ENCODE measurements at regions of chr11 and their contacts with region 1.

Region 1: DNA sequence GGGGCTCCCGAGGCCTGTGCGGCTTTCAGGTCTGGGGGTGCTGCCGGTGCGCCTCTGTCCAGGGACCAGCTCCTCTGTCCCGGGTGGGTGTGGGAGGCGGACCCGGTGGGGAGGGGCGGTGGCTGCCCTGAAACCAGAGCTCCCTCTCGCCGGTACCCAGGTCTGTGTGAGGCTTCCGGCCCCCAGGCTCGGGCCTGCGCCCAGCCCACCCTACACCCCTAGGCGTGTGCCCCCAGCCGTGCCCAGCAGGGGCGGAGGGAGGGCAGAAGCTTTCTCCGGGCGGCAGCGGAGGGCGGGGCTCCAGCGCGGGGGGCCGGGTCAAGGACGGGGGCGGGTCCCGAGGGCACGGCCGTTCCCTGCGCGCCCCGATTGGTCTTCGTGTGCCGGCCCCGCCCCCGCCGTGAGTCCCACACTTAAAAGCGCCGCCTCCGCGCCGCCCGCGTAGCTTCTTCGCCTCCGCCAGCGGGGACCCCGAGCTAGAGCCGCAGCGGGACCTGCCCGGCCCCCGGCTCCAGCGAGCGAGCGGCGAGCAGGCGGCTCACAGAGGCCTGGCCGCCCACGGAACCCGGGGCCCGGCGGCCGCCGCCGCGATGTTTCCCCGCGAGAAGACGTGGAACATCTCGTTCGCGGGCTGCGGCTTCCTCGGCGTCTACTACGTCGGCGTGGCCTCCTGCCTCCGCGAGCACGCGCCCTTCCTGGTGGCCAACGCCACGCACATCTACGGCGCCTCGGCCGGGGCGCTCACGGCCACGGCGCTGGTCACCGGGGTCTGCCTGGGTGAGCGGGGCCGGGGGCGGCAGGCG is 616 bp downstream of the PNPLA2 start:
- DNase-seq: no peak
- H3K4me3 ChIP-seq: peak overlapping the region; percentile 83
- H3K27me3 ChIP-seq: no peaks in the 10 kb centered on the region
- CTCF ChIP-seq: peak; percentile 12; the same call in 1 of the 2 replicates

Region 2: DNA sequence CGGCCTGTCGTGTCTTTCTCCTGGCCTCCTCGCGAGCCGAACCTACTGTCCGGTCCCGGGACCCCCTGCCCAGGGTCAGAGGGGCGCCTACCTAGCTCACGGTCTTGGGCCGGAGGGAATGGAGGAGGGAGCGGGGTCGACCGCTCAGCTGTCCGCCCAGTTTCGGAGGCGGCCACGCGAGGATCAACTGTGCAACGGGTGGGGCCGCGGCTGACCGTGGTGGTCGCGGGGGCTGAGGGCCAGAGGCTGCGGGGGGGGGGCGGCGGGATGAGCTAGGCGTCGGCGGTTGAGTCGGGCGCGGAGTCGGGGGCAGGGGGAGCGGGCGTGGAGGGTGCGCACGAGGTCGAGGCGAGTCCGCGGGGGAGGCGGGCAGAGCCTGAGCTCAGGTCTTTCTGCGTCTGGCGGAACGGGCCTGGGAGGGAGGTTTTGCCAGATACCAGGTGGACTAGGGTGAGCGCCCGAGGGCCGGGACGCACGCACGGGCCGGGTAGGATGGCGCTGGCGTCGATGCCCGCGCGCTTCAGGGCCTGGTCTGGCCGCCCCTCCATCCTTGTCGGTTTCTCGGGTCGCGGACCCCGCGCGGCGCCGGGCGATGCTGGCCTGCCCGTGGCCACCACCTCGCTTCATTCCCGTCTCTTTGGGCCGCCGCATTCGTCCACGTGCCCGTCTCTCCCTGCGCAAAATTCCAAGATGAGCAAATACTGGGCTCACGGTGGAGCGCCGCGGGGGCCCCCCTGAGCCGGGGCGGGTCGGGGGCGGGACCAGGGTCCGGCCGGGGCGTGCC is 182.7 kb before region 1 on chr11:
- CTCF ChIA-PET with region 1: no interaction called
- POLR2A ChIA-PET with region 1: no interaction called
- DNase-seq: no peak
- H3K4me3 ChIP-seq: peak overlapping the region; percentile 13; the same call in 1 of the 2 replicates
- H3K27me3 ChIP-seq: peaks cover 3% of the 10 kb centered on the region; the same call in 1 of the 2 replicates
- CTCF ChIP-seq: no peak

Region 3: GRCh38 chr11:706957-707816 is 112.1 kb before region 1 on chr11:
- CTCF ChIA-PET with region 1: no interaction called
- POLR2A ChIA-PET with region 1: no interaction called
- DNase-seq: no peak
- H3K4me3 ChIP-seq: peak overlapping the region; percentile 75
- H3K27me3 ChIP-seq: no peaks in the 10 kb centered on the region
- CTCF ChIP-seq: peak; percentile 13; the same call in 1 of the 2 replicates

Region 4: DNA sequence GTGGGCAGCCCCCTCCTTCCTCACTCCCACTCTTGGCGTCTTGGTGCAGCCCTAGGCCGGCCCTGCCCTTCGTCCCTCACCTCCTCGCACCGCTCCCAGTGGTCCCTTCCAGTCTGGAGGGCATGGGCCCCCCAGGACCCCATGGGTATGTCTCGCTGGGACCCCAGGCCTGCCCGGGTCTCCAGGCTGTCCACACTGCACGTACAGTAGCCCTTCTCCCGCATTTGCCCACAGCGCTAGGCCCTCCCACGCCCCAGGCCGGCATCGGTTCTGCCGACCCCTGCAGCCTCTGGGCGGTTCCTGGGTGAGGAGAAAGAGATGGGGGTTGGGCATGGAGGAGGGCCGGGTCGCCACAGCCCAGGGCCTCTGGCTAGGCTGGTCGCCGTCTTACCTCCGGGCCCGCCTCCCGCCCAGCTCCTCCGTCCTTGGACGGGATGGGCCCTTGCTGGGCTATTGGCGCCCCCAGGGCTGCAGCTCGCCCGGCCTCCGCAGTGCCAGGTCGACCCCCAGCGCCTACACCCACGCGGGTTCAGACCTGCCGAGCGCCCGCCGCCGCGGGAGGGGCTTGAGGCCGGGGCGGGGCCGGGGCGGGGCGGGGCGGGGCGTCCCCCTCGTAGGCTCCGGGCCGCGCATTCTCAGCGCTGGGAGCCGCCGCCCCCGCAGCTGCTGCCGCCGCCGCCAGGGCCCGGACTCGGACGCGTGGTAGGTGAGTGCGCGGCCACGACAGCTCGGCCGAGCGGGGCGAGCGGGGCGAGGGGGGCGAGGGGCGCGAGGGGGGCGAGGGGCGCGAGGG is 13.2 kb after region 1 on chr11 and contains the start of gene CD151:
- CTCF ChIA-PET with region 1: interaction called, 8 read pairs
- POLR2A ChIA-PET with region 1: interaction called, 11 read pairs
- DNase-seq: no peak
- H3K4me3 ChIP-seq: peak within 1 kb of the TSS; percentile 80
- H3K27me3 ChIP-seq: no peaks in the 10 kb centered on the region
- CTCF ChIP-seq: no peak
- polyA plus RNA-seq, gene CD151: 1,448 and 2,262 TPM in 2 replicates

Region 5: DNA sequence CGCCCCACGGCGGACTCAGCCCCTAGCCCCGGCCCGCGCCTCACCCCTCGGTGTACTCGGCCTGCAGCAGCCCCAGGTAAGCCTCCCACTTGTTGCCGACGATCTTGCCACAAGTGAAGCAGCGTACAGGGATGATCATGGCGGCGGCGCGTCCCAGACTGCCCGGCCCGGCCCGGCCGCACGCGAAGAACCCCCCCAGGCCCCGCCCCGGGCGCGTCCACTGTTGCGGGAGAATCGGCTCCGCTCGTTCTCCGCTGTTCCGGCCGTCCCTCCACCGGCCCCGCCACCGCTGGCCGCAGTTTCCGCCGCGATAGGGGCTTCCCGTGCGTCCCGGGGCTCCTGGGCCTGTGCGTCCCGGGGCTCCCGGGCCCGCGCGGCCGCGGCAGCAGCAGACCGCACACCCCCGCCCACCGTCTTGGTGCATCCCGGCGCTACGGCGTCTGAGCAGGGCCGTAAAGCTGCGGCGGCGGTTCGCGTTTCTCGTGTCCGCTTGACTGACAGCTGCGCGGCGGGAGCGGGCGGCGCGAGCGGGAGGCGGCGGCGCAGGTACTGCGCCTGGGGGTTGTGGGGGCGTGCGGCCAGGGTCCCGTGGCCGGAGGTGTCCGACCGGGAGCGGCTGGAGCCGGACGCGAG is 23.2 kb after region 1 on chr11 and contains the starts of genes POLR2L and TSPAN4:
- CTCF ChIA-PET with region 1: interaction called, 3 read pairs
- POLR2A ChIA-PET with region 1: interaction called, 32 read pairs
- DNase-seq: no peak
- H3K4me3 ChIP-seq: peak within 1 kb of the TSS; percentile 96
- H3K27me3 ChIP-seq: no peaks in the 10 kb centered on the region
- CTCF ChIP-seq: no peak
- polyA plus RNA-seq, gene POLR2L: 308 and 734 TPM in 2 replicates
- polyA plus RNA-seq, gene TSPAN4: 145 and 295 TPM in 2 replicates